SK-N-SH (cell line): ENCODE measurements at regions of chr9 and their contacts with region 1.

Region 1: DNA sequence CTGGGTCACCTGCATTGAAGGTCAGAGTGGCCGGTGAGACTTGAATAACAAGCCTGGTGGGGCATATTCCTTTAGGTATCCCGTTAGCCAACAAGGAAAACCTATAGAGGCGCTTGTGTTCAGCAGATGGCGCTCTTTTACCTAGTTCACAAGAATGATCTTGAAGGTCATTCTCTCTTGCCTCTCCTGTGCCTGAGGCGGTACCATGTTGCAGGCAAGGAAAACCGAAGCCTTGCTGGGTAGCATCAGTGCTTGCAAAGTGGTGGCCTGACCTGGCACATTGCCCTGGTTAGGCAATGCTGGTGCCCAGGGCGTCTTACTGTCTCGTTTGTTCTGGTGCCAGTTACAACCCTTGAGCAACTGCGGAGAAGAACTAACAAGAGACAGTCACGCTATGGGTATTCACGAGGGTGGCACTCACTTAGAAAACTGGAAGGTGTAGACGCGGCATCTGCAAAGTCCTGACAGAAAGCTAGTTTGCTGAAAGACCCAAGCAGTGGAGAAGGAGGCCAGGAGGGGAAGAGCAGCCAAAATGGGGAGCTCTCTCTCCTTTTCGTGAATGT is 56.7 kb downstream of the AOPEP start:
- DNase-seq: peak; percentile 68
- H3K4me3 ChIP-seq: peak overlapping the region in 1 of 2 experiments; percentile 5; a peak in 1 of 4 replicates
- H3K27ac ChIP-seq: peak overlapping the region; percentile 93 to 97
- H3K4me1 ChIP-seq: peaks cover 8 to 40% of the 10 kb centered on the region in 2 experiments
- H3K27me3 ChIP-seq: no peaks in the 10 kb centered on the region
- CTCF ChIP-seq: peak; percentile 78
- EP300 ChIP-seq: peak in 1 of 2 experiments; percentile 82; a peak in 2 of 4 replicates
- RAD21 ChIP-seq: peak; percentile 92

Region 2: DNA sequence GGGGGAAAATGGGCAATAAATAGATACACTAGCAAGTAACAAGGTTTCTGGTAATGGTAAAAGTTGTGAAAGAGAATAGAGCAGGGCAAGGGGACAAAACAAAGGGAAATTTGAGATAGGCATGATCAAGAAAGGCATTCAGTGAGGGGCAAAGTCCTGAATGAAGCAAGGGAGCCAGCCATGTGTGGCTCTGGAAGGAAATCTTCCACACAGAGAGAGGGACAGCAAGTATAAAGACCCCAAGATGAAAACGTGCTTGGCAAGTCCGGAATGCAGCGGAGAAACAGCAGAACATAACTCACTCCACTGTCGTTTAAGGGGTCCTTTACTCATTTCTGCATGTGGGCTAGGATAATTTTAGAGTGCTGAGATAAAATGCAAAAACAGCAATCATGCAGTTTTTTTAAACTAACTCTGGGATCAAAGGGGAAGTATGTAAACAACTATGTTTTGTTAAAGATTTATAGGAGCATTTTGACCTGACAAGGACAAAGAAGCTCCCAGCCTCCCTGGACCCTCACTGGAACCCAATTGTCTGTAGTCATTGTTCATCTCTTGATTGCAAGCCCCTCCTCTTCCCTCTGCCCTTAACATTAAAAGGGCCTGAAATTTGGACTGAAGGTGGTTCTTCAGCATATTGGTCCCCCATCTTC is 79.6 kb before region 1 on chr9:
- CTCF ChIA-PET with region 1: interaction called, 3 read pairs
- POLR2A ChIA-PET with region 1: interaction called, 16 read pairs
- DNase-seq: no peak
- H3K4me3 ChIP-seq: no peak overlapping the region
- H3K27ac ChIP-seq: peak overlapping the region in 1 of 2 experiments; percentile 98; a peak in 2 of 4 replicates
- H3K4me1 ChIP-seq: peaks cover 0 to 22% of the 10 kb centered on the region in 2 experiments; a peak in 2 of 4 replicates
- H3K27me3 ChIP-seq: no peaks in the 10 kb centered on the region
- CTCF ChIP-seq: no peak
- EP300 ChIP-seq: no peak
- RAD21 ChIP-seq: no peak

Region 3: DNA sequence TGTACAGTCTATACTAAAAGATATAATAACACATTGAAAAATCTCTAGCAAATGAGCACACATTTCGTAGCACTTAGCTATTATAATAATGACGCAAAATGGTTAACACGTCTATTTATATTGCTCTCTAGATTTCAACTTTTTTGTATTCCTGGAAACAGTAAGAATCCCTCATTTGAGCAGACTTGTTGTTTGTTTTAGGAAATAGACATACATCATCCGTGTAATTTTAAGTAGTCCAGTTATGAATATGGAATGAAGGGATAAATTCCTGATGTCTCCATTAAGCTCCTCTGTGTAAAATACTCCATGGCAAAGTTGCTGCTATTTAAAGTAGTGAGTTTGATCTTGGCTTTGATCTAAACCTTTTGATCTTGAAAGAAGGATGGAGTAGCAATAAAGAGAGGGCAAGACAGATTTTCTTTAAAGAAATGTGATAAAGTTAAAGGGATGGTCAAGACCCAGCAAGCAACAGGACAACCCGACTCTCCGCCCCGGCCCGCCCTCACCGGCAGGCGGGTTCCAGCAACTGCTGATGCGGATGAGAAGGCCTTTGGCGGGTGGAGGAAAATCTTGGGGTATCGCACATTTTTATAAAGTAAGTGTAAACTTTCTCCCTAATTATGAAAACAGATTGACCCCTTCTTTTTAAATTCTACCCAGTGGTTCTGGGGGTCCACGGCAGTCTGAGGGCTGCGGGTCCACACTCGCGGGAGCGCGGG is 220.7 kb after region 1 on chr9:
- CTCF ChIA-PET with region 1: interaction called, 16 read pairs
- POLR2A ChIA-PET with region 1: interaction called, 4 read pairs
- DNase-seq: peak; percentile 80
- H3K4me3 ChIP-seq: peak overlapping the region; percentile 67 to 87
- H3K27ac ChIP-seq: peak overlapping the region; percentile 84 to 97
- H3K4me1 ChIP-seq: peaks cover 0 to 22% of the 10 kb centered on the region in 2 experiments; a peak in 2 of 4 replicates
- H3K27me3 ChIP-seq: no peaks in the 10 kb centered on the region
- CTCF ChIP-seq: peak; percentile 25
- EP300 ChIP-seq: no peak
- RAD21 ChIP-seq: no peak; the same call in 1 of the 2 replicates